ENCODE measurements at regions of chr22 and their contacts with region 1.

Region 1: GRCh38 chr22:29040385-29041275 is 21.0 kb downstream of the C22orf31 start:
- DNase-seq: peak in 8 of 9 donors; percentile 41 to 73 (median 66)
- ATAC-seq: peak; percentile 87
- H3K4me3 ChIP-seq: no peak overlapping the region
- H3K4me3 Mint-ChIP-seq: no peak overlapping the region
- H3K27ac ChIP-seq: no peak overlapping the region
- H3K27ac Mint-ChIP-seq: no peak overlapping the region
- H3K4me1 ChIP-seq: no peaks in the 10 kb centered on the region
- H3K4me1 Mint-ChIP-seq: no peaks in the 10 kb centered on the region
- H3K27me3 ChIP-seq: no peaks in the 10 kb centered on the region
- H3K27me3 Mint-ChIP-seq: peaks cover 3 to 25% (median 4%) of the 10 kb centered on the region in 5 donors

Region 2: GRCh38 chr22:28600546-28601143 is 440.0 kb before region 1 on chr22:
- CTCF ChIA-PET with region 1: interaction called, 50 read pairs
- POLR2A ChIA-PET with region 1: no interaction called
- intact Hi-C with region 1: loop called in 1 of 2 experiments (anchors 1 kb)
- DNase-seq: peak in 7 of 9 donors; percentile 30 to 66 (median 57)
- ATAC-seq: no peak
- H3K4me3 ChIP-seq: no peak overlapping the region
- H3K4me3 Mint-ChIP-seq: no peak overlapping the region
- H3K27ac ChIP-seq: no peak overlapping the region
- H3K27ac Mint-ChIP-seq: no peak overlapping the region
- H3K4me1 ChIP-seq: no peaks in the 10 kb centered on the region
- H3K4me1 Mint-ChIP-seq: no peaks in the 10 kb centered on the region
- H3K27me3 ChIP-seq: peaks cover 4 to 7% of the 10 kb centered on the region in 2 donors
- H3K27me3 Mint-ChIP-seq: peaks cover 10 to 64% (median 31%) of the 10 kb centered on the region in 5 donors

Region 3: GRCh38 chr22:28791841-28792490 is 248.7 kb before region 1 on chr22:
- CTCF ChIA-PET with region 1: interaction called, 17 read pairs
- POLR2A ChIA-PET with region 1: no interaction called
- intact Hi-C with region 1: loop called (anchors 1 to 5 kb)
- DNase-seq: no peak
- ATAC-seq: peak; percentile 23
- H3K4me3 ChIP-seq: no peak overlapping the region
- H3K4me3 Mint-ChIP-seq: peak overlapping the region in 5 of 10 donors; percentile 10 to 40 (median 34)
- H3K27ac ChIP-seq: no peak overlapping the region
- H3K27ac Mint-ChIP-seq: peak overlapping the region; percentile 12 to 97 (median 63)
- H3K4me1 ChIP-seq: peaks cover 22 to 34% of the 10 kb centered on the region in 2 donors
- H3K4me1 Mint-ChIP-seq: peaks cover 38 to 74% (median 66%) of the 10 kb centered on the region in 7 donors
- H3K27me3 ChIP-seq: no peaks in the 10 kb centered on the region
- H3K27me3 Mint-ChIP-seq: no peaks in the 10 kb centered on the region

Region 4: GRCh38 chr22:28855355-28856094 is 185.1 kb before region 1 on chr22:
- CTCF ChIA-PET with region 1: interaction called, 46 read pairs
- POLR2A ChIA-PET with region 1: interaction called, 4 read pairs
- intact Hi-C with region 1: loop called (anchors 1 kb)
- DNase-seq: peak in 8 of 9 donors; percentile 29 to 70 (median 58)
- ATAC-seq: peak; percentile 68
- H3K4me3 ChIP-seq: no peak overlapping the region
- H3K4me3 Mint-ChIP-seq: no peak overlapping the region
- H3K27ac ChIP-seq: no peak overlapping the region
- H3K27ac Mint-ChIP-seq: no peak overlapping the region
- H3K4me1 ChIP-seq: no peaks in the 10 kb centered on the region
- H3K4me1 Mint-ChIP-seq: no peaks in the 10 kb centered on the region
- H3K27me3 ChIP-seq: no peaks in the 10 kb centered on the region
- H3K27me3 Mint-ChIP-seq: peaks cover 3 to 18% (median 5%) of the 10 kb centered on the region in 5 donors